Motor neuron (in vitro differentiated cells): ENCODE measurements at regions of chr2 and their contacts with region 1.

Region 1: DNA sequence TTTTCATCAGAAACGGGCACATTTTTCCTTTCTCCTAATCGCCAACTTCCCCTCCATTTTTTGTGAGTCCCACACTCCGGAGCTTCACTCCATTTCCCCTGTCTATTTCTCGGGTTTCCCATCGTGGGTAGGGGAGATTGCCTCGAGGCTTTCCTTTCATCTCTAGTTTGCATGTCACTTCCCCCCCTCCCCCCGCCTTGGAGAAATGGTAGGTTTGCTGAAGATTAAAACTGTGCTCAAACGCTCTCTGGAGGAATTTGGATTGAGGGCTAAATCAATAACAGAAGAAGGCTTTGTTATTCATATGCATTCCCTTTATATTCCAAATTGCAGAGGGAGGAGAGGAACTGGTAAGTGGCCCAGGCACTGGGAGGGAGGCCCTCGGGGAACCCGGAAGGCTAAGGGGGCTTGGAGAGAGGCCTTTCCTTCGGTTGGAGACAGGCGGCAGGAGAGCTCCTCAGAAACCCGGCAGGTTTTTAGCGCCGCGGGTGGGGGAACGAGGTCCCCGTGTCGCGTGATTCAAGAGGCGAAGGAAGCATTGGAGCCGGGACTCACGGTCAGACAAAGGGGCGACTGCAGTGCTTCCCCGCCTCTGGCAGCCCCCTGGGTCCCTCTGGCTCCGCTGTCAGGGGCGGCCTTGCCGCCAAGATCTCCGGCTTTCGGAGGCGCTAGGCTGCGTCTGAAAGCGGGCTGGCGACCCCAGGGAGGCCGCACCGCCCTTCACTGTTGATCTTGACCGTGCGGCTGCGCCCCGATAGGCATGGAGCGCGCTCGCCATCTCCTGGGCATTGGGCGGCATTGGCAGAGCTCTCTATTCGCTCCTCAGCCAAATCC is 2.4 kb upstream of the HOXD12 start:
- ATAC-seq: peak; percentile 76 to 89 (median 82)
- H3K4me3 ChIP-seq: peak overlapping the region; percentile 11 to 39 (median 32)
- H3K27ac ChIP-seq: no peak overlapping the region
- H3K4me1 ChIP-seq: peaks cover 5 to 14% of the 10 kb centered on the region in 2 donors

Region 2: GRCh38 chr2:174697255-174697654 is 1399.9 kb before region 1 on chr2:
- in situ Hi-C with region 1: loop called in 3 of 9 experiments (anchors 25 kb)
- ATAC-seq: peak; percentile 60 to 98 (median 85)
- H3K4me3 ChIP-seq: no peak overlapping the region
- H3K27ac ChIP-seq: no peak overlapping the region
- H3K4me1 ChIP-seq: no peaks in the 10 kb centered on the region

Region 3: DNA sequence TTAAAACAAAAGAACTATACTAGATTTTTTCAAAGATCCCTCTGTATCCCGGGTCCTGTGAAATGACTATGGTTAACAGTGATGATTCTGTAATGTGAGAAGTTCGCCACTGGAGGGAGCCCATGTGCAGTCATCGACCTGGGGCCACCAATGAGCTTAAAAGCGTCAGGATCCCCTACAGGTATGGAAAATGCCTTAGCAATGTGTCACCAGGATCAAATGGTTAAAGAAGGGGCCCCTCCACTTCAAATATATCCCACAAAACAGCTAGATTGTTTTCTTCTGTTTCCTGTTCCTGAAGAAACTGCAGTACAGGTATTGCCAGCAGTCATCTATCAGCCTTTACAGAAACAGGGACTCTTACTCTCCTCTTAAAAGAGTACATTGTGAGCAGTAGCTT is 1348.3 kb before region 1 on chr2:
- in situ Hi-C with region 1: loop called in 1 of 9 experiments (anchors 25 kb)
- ATAC-seq: peak; percentile 67 to 96 (median 80)
- H3K4me3 ChIP-seq: no peak overlapping the region
- H3K27ac ChIP-seq: no peak overlapping the region
- H3K4me1 ChIP-seq: peaks cover 0 to 2% of the 10 kb centered on the region in 2 donors

Region 4: DNA sequence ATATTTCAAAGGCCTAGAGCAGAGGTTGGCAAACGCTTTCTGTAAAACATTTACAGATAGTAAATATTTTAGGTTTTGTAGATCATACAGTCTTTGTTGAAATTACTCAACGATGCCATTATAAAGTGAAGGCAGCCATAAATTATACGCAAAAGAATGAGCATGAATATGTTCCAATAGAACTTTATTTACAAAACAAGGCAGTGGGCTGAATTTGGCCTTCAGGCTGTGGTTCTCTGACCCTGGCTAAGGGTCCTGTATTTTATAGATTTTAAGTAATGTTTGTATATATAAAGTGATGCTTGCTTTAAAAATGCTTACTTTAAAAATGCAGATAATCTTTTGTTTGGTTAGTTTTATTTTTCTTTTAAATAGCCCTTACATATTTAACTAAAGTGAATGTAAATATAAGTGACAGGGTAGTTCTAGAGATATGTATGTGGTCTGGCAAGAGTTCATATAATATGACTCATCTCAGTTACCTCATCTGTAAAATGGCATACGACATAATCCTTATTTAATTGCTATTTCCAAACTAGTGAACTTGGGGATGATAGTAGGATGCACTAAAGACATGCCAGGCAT is 864.0 kb before region 1 on chr2:
- in situ Hi-C with region 1: loop called in 1 of 9 experiments (anchors 25 kb)
- ATAC-seq: peak in 3 of 8 experiments; percentile 68 to 73 (median 70)
- H3K4me3 ChIP-seq: no peak overlapping the region
- H3K27ac ChIP-seq: no peak overlapping the region
- H3K4me1 ChIP-seq: peaks cover 0 to 2% of the 10 kb centered on the region in 2 donors

Region 5: GRCh38 chr2:175366815-175367214 is 730.4 kb before region 1 on chr2:
- in situ Hi-C with region 1: loop called in 6 of 9 experiments (anchors 25 kb)
- ATAC-seq: peak; percentile 77 to 98 (median 90)
- H3K4me3 ChIP-seq: no peak overlapping the region
- H3K27ac ChIP-seq: no peak overlapping the region
- H3K4me1 ChIP-seq: peaks cover 5 to 14% of the 10 kb centered on the region in 2 donors

Region 6: GRCh38 chr2:175690113-175690837 is 406.9 kb before region 1 on chr2:
- in situ Hi-C with region 1: loop called in 2 of 9 experiments (anchors 25 kb)
- ATAC-seq: peak in 6 of 8 experiments; percentile 45 to 96 (median 74)
- H3K4me3 ChIP-seq: no peak overlapping the region
- H3K27ac ChIP-seq: no peak overlapping the region
- H3K4me1 ChIP-seq: peaks cover 0 to 27% of the 10 kb centered on the region in 2 donors